ENCODE measurements at regions of chr1 and their contacts with region 1.

Region 1: GRCh38 chr1:26321315-26322041 is 3.7 kb downstream of the CD52 start:
- DNase-seq: peak; percentile 81 to 91 (median 88)
- H3K4me3 ChIP-seq: no peak overlapping the region
- H3K27ac ChIP-seq: no peak overlapping the region
- H3K4me1 ChIP-seq: no peaks in the 10 kb centered on the region
- H3K27me3 ChIP-seq: no peaks in the 10 kb centered on the region
- CTCF ChIP-seq: peak; percentile 46 to 85 (median 80)
- EP300 ChIP-seq: no peak
- POLR2A ChIP-seq: no peak

Region 2: GRCh38 chr1:26083246-26083645 is 238.2 kb before region 1 on chr1:
- intact Hi-C with region 1: no loop called
- DNase-seq: no peak
- H3K4me3 ChIP-seq: no peak overlapping the region
- H3K27ac ChIP-seq: no peak overlapping the region
- H3K4me1 ChIP-seq: no peaks in the 10 kb centered on the region
- H3K27me3 ChIP-seq: no peaks in the 10 kb centered on the region
- CTCF ChIP-seq: no peak
- EP300 ChIP-seq: no peak
- POLR2A ChIP-seq: no peak

Region 3: GRCh38 chr1:26102526-26102925 is 219.0 kb before region 1 on chr1:
- intact Hi-C with region 1: loop called in 2 of 4 experiments (anchors 5 to 10 kb)
- DNase-seq: no peak
- H3K4me3 ChIP-seq: no peak overlapping the region
- H3K27ac ChIP-seq: no peak overlapping the region
- H3K4me1 ChIP-seq: no peaks in the 10 kb centered on the region
- H3K27me3 ChIP-seq: no peaks in the 10 kb centered on the region
- CTCF ChIP-seq: no peak
- EP300 ChIP-seq: no peak
- POLR2A ChIP-seq: no peak

Region 4: DNA sequence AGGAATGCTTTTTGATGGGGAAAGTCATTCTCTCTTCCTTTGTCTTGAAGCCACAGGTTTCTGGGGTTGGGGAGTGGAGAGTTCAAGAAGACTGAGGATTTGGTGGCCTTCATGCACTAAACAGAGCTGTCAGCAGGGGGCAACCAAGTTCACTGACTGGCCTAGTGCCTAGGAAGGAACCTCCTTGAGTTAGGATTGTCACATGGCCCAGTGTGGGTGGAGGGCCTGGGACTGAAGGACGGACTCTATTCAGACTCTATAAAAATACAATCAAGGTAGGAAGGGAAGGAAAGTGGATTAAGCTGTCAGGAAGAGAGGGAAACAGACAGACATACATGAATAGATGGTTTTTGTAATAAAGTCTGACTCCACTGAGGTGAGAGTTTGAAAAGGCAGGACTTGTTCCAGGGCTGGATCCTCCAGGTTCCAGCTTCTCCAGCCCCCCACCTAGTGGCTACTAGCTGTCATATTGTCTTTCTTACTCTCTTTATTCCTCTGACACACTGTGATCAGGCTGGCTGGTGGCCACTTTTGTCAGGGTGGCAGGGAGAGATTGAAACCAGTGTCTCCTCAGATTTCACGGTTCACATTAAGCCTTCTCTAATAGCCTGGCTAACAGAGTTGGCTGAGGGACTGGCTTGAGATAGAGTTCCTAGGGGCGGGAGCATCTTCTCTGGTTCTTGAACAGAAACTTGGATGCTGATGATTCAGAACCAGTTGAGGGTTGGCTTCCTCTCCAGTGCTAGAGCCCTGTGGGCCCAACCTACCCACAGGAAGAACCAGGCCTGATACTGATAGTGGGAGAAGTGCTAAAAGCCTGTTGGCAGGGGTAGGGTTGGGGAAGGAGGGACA is 45.7 kb before region 1 on chr1:
- intact Hi-C with region 1: loop called in 2 of 4 experiments (anchors 1 to 2 kb)
- DNase-seq: peak; percentile 71 to 85 (median 78)
- H3K4me3 ChIP-seq: no peak overlapping the region
- H3K27ac ChIP-seq: peak overlapping the region in 1 of 2 donors; percentile 47
- H3K4me1 ChIP-seq: peaks cover 6% of the 10 kb centered on the region
- H3K27me3 ChIP-seq: no peaks in the 10 kb centered on the region
- CTCF ChIP-seq: peak; percentile 52 to 72 (median 70)
- EP300 ChIP-seq: no peak
- POLR2A ChIP-seq: no peak